ENCODE measurements at regions of chr11 and their contacts with region 1.

Region 1: DNA sequence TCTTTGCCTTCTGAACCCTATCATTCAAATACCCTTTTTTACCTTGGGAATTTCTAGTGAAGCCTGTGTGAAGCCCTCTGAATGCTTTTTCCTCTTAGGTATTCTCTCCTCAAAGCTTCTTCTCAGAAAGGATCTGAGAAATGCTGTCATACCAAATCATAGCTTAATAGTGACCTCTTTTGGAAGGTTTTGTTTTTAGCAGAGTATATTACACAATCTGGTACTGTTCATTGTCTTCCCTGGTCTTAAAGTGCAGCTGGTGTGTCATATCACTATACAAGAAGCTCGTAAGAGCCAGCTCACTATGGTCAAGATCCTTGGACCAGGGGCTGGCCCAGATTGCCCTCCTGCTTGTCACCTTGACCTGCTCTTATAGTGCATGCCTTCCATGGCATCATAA is 204.4 kb upstream of the ANO5 start:
- DNase-seq: no peak
- ATAC-seq: no peak
- H3K4me3 ChIP-seq: no peak overlapping the region
- H3K4me3 Mint-ChIP-seq: no peak overlapping the region
- H3K27ac ChIP-seq: no peak overlapping the region
- H3K27ac Mint-ChIP-seq: no peak overlapping the region
- H3K4me1 ChIP-seq: no peaks in the 10 kb centered on the region
- H3K4me1 Mint-ChIP-seq: no peaks in the 10 kb centered on the region
- H3K27me3 ChIP-seq: no peaks in the 10 kb centered on the region
- H3K27me3 Mint-ChIP-seq: no peaks in the 10 kb centered on the region
- CTCF ChIP-seq: no peak

Region 2: GRCh38 chr11:21912285-21912684 is 76.2 kb before region 1 on chr11:
- CTCF ChIA-PET with region 1: no interaction called
- POLR2A ChIA-PET with region 1: no interaction called
- intact Hi-C with region 1: loop called in 1 of 2 experiments (anchors 2 kb)
- DNase-seq: no peak
- ATAC-seq: no peak
- H3K4me3 ChIP-seq: no peak overlapping the region
- H3K4me3 Mint-ChIP-seq: no peak overlapping the region
- H3K27ac ChIP-seq: no peak overlapping the region
- H3K27ac Mint-ChIP-seq: no peak overlapping the region
- H3K4me1 ChIP-seq: no peaks in the 10 kb centered on the region
- H3K4me1 Mint-ChIP-seq: no peaks in the 10 kb centered on the region
- H3K27me3 ChIP-seq: no peaks in the 10 kb centered on the region
- H3K27me3 Mint-ChIP-seq: no peaks in the 10 kb centered on the region
- CTCF ChIP-seq: no peak